Heart right ventricle (tissue), 16 donors: ENCODE measurements at regions of chr15 and their contacts with region 1.

Region 1: GRCh38 chr15:34721802-34722795 is 32.7 kb downstream of the GJD2 start:
- DNase-seq: peak; percentile 68 to 70
- ATAC-seq: peak; percentile 88 to 96 (median 94)
- H3K4me3 ChIP-seq: peak overlapping the region in 7 of 10 donors; percentile 9 to 40 (median 23)
- H3K27ac ChIP-seq: peak overlapping the region; percentile 66 to 87 (median 78)
- H3K4me1 ChIP-seq: peaks cover 0 to 68% (median 34%) of the 10 kb centered on the region in 9 donors
- H3K27me3 ChIP-seq: peaks cover 0 to 11% (median 0%) of the 10 kb centered on the region in 7 donors
- CTCF ChIP-seq: peak in 2 of 9 donors; percentile 8 to 27

Region 2: DNA sequence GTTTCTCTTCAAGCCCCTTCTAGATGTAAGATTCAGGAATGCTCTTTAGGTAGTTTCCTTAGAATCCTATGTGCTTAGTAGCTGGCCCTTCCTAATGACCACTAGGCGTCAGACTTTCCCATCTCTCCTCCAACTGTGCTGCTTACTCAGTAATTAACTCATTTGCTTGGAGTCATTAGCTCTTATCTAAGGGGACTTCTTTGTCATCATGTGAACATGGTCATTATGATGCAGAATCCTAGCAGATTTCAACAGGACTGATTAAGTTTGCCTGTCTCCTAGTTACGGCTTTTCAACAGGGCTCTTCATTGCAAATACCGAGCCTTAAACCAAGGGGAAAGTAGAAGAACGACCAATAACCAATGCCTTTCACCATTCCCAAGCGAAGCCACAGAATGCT is 13.7 kb before region 1 on chr15:
- intact Hi-C with region 1: no loop called
- DNase-seq: no peak
- ATAC-seq: peak in 7 of 8 donors; percentile 54 to 84 (median 79)
- H3K4me3 ChIP-seq: peak overlapping the region in 1 of 10 donors; percentile 3
- H3K27ac ChIP-seq: no peak overlapping the region
- H3K4me1 ChIP-seq: peaks cover 0 to 3% (median 0%) of the 10 kb centered on the region in 9 donors
- H3K27me3 ChIP-seq: no peaks in the 10 kb centered on the region
- CTCF ChIP-seq: peak; percentile 46 to 81 (median 67)

Region 3: GRCh38 chr15:34773917-34774316 is 51.8 kb after region 1 on chr15:
- intact Hi-C with region 1: no loop called
- DNase-seq: no peak
- ATAC-seq: no peak
- H3K4me3 ChIP-seq: no peak overlapping the region
- H3K27ac ChIP-seq: no peak overlapping the region
- H3K4me1 ChIP-seq: peaks cover 0 to 15% (median 0%) of the 10 kb centered on the region in 9 donors
- H3K27me3 ChIP-seq: no peaks in the 10 kb centered on the region
- CTCF ChIP-seq: no peak

Region 4: DNA sequence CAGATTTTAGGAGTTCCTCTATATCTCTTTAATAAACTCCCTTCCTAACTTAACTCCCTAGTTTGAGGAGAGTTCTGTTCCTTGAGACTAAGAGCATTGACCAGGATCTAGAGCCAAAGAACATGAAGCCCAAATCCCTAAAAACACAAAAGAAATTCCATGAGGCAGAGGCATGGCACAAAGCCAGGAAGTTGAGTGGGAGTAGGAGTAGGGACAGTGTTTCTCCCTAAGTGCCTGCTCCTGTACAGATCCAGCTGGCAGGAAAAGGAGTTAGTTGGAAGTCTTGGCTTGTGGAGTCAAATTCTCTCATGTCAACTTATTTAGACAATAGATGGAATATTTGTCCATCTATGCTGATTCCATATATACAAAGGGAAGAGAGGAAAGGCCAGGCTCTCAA is 61.9 kb after region 1 on chr15:
- intact Hi-C with region 1: loop called in 2 of 10 experiments (anchors 5 to 10 kb)
- DNase-seq: no peak
- ATAC-seq: no peak
- H3K4me3 ChIP-seq: no peak overlapping the region
- H3K27ac ChIP-seq: no peak overlapping the region
- H3K4me1 ChIP-seq: no peaks in the 10 kb centered on the region
- H3K27me3 ChIP-seq: no peaks in the 10 kb centered on the region
- CTCF ChIP-seq: no peak

Region 5: GRCh38 chr15:34789326-34789725 is 67.2 kb after region 1 on chr15:
- intact Hi-C with region 1: loop called in 2 of 10 experiments (anchors 5 to 10 kb)
- DNase-seq: no peak
- ATAC-seq: peak; percentile 7 to 48 (median 26)
- H3K4me3 ChIP-seq: no peak overlapping the region
- H3K27ac ChIP-seq: peak overlapping the region in 1 of 10 donors; percentile 0
- H3K4me1 ChIP-seq: no peaks in the 10 kb centered on the region
- H3K27me3 ChIP-seq: peaks cover 0 to 24% (median 2%) of the 10 kb centered on the region in 7 donors
- CTCF ChIP-seq: no peak

Region 6: DNA sequence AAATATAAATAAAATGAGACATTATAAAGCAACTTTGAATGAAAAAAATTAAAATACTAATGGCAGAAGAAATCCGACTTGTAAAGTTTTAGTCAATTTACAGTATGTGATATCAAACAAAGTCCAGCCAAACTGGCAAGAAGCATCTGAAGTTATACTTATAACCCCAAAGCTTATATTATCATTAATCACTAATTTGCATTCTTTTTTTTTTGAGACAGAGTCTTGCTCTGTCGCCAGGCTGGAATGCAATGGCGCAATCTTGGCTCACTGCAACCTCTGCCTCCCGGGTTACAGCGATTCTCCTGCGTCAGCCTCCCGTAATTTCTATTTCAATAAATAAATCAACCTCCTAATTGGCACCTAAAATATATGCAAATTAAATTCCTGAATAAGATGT is 167.4 kb after region 1 on chr15:
- intact Hi-C with region 1: no loop called
- DNase-seq: no peak
- ATAC-seq: no peak
- H3K4me3 ChIP-seq: no peak overlapping the region
- H3K27ac ChIP-seq: no peak overlapping the region
- H3K4me1 ChIP-seq: no peaks in the 10 kb centered on the region
- H3K27me3 ChIP-seq: no peaks in the 10 kb centered on the region
- CTCF ChIP-seq: no peak